ENCODE measurements at regions of chrX and their contacts with region 1.

Region 1: DNA sequence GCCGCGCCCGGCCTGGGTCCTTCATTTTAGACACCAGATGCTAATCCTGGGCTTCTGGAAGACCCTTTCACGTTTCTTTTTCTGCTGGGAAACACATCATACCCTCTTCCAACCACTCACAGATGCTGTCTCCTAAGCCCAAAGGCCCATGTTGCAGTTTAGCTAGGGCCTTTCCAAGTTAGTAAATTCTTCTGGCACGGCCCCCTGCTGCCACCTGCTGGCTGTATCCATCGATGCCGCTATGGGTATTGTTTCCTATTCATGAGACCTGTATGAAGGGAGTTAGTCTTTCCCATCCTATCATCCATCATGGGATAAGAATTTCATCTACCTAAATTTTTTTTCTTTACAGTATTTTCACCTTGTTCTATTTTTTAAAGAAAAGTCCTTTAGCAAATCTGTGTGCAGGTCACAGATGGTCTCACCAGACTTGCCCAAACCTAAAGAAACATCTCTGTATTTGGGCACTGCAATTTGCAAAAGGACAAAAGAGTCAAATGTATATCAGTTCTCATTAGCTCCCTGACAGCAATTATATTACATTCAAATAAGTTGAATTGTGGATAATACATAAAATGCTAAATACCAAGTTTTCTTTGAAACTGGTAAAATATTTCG is 37.8 kb upstream of the SLC9A7 start:
- DNase-seq: peak; percentile 87
- ATAC-seq: peak; percentile 77
- H3K4me3 Mint-ChIP-seq: no peak overlapping the region
- H3K27ac Mint-ChIP-seq: no peak overlapping the region
- H3K4me1 Mint-ChIP-seq: peaks cover 20% of the 10 kb centered on the region
- H3K27me3 Mint-ChIP-seq: no peaks in the 10 kb centered on the region
- CTCF ChIP-seq: peak; percentile 73

Region 2: GRCh38 chrX:46758906-46759644 is 37.6 kb before region 1 on chrX and contains the start of gene SLC9A7:
- CTCF ChIA-PET with region 1: interaction called, 33 read pairs
- POLR2A ChIA-PET with region 1: interaction called, 3 read pairs
- intact Hi-C with region 1: loop called (anchors 2 kb)
- DNase-seq: peak; percentile 85
- ATAC-seq: peak; percentile 83
- H3K4me3 Mint-ChIP-seq: peak within 1 kb of the TSS; percentile 96
- H3K27ac Mint-ChIP-seq: peak within 1 kb of the TSS; percentile 90
- H3K4me1 Mint-ChIP-seq: peaks cover 15% of the 10 kb centered on the region
- H3K27me3 Mint-ChIP-seq: peaks cover 5% of the 10 kb centered on the region
- CTCF ChIP-seq: peak; percentile 68
- total RNA-seq, gene SLC9A7: 16.9 to 17.0 TPM